Left ventricle myocardium superior (tissue), 1 donor: ENCODE measurements at regions of chr12 and their contacts with region 1.

Region 1: DNA sequence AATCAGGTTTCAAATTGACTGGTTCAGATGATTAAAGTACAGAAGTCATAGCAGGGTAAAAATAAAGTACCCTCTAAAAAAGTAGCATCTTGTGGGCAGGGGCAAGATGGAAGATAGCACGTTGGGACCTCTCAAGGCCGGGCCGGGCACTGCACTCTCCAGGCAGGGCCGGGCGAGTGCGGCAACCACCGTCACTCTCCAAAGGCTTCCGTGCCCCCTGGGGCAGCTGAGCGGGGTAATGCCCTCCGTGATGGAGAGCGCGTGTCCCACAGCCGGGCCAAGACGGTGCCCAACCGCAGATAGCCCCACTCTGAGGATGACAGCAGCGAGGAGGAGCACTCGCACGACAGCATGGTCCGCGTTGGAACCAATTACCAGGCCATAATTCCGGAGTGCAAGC is 8.6 kb upstream of the PLXNC1 start:
- DNase-seq: no peak
- ATAC-seq: no peak

Region 2: GRCh38 chr12:94532490-94533422 is 392.9 kb after region 1 on chr12:
- intact Hi-C with region 1: loop called (anchors 5 kb)
- DNase-seq: peak; percentile 75
- ATAC-seq: peak; percentile 86